Naive thymus-derived CD4-positive, alpha-beta T cell (primary cell): ENCODE measurements at regions of chr14 and their contacts with region 1.

Region 1: GRCh38 chr14:24710403-24711112 is 76.6 kb upstream of the GZMB start:
- DNase-seq: peak in 7 of 9 donors; percentile 16 to 48 (median 40)
- ATAC-seq: peak; percentile 80
- H3K4me3 ChIP-seq: no peak overlapping the region
- H3K4me3 Mint-ChIP-seq: no peak overlapping the region
- H3K27ac ChIP-seq: no peak overlapping the region
- H3K27ac Mint-ChIP-seq: no peak overlapping the region
- H3K4me1 ChIP-seq: no peaks in the 10 kb centered on the region
- H3K4me1 Mint-ChIP-seq: peaks cover 0 to 4% (median 0%) of the 10 kb centered on the region in 7 donors
- H3K27me3 ChIP-seq: no peaks in the 10 kb centered on the region
- H3K27me3 Mint-ChIP-seq: peaks cover 3 to 18% (median 9%) of the 10 kb centered on the region in 5 donors

Region 2: GRCh38 chr14:23910101-23910875 is 800.3 kb before region 1 on chr14:
- CTCF ChIA-PET with region 1: no interaction called
- POLR2A ChIA-PET with region 1: no interaction called
- intact Hi-C with region 1: no loop called
- DNase-seq: peak in 2 of 9 donors; percentile 2 to 4
- ATAC-seq: peak; percentile 45
- H3K4me3 ChIP-seq: no peak overlapping the region
- H3K4me3 Mint-ChIP-seq: no peak overlapping the region
- H3K27ac ChIP-seq: no peak overlapping the region
- H3K27ac Mint-ChIP-seq: no peak overlapping the region
- H3K4me1 ChIP-seq: no peaks in the 10 kb centered on the region
- H3K4me1 Mint-ChIP-seq: peaks cover 0 to 1% (median 0%) of the 10 kb centered on the region in 7 donors
- H3K27me3 ChIP-seq: no peaks in the 10 kb centered on the region
- H3K27me3 Mint-ChIP-seq: peaks cover 8 to 39% (median 20%) of the 10 kb centered on the region in 5 donors

Region 3: GRCh38 chr14:24398653-24399446 is 311.7 kb before region 1 on chr14 and contains the start of gene NYNRIN:
- CTCF ChIA-PET with region 1: no interaction called
- POLR2A ChIA-PET with region 1: no interaction called
- intact Hi-C with region 1: no loop called
- DNase-seq: peak in 7 of 9 donors; percentile 17 to 46 (median 35)
- ATAC-seq: peak; percentile 78
- H3K4me3 ChIP-seq: peak within 1 kb of the TSS; percentile 37
- H3K4me3 Mint-ChIP-seq: peak within 1 kb of the TSS; percentile 71 to 84 (median 76)
- H3K27ac ChIP-seq: peak within 1 kb of the TSS; percentile 43
- H3K27ac Mint-ChIP-seq: peak within 1 kb of the TSS in 1 of 9 donors; percentile 90
- H3K4me1 ChIP-seq: peaks cover 0 to 5% of the 10 kb centered on the region in 2 donors
- H3K4me1 Mint-ChIP-seq: peaks cover 0 to 18% (median 15%) of the 10 kb centered on the region in 7 donors
- H3K27me3 ChIP-seq: no peaks in the 10 kb centered on the region
- H3K27me3 Mint-ChIP-seq: peaks cover 0 to 61% (median 8%) of the 10 kb centered on the region in 5 donors
- total RNA-seq, gene NYNRIN: 0.08 to 1.3 (median 0.11) TPM

Region 4: GRCh38 chr14:24597403-24597802 is 113.2 kb before region 1 on chr14:
- CTCF ChIA-PET with region 1: no interaction called
- POLR2A ChIA-PET with region 1: no interaction called
- intact Hi-C with region 1: no loop called
- DNase-seq: no peak
- ATAC-seq: no peak
- H3K4me3 ChIP-seq: no peak overlapping the region
- H3K4me3 Mint-ChIP-seq: no peak overlapping the region
- H3K27ac ChIP-seq: no peak overlapping the region
- H3K27ac Mint-ChIP-seq: no peak overlapping the region
- H3K4me1 ChIP-seq: no peaks in the 10 kb centered on the region
- H3K4me1 Mint-ChIP-seq: peaks cover 0 to 12% (median 0%) of the 10 kb centered on the region in 7 donors
- H3K27me3 ChIP-seq: no peaks in the 10 kb centered on the region
- H3K27me3 Mint-ChIP-seq: peaks cover 12 to 28% (median 14%) of the 10 kb centered on the region in 5 donors

Region 5: GRCh38 chr14:24678801-24679247 is 31.7 kb before region 1 on chr14:
- CTCF ChIA-PET with region 1: interaction called, 3 read pairs
- POLR2A ChIA-PET with region 1: no interaction called
- intact Hi-C with region 1: loop called in 1 of 2 experiments (anchors 1 kb)
- DNase-seq: peak; percentile 45 to 85 (median 78)
- ATAC-seq: peak; percentile 96
- H3K4me3 ChIP-seq: peak overlapping the region; percentile 33
- H3K4me3 Mint-ChIP-seq: peak overlapping the region; percentile 71 to 93 (median 86)
- H3K27ac ChIP-seq: no peak overlapping the region
- H3K27ac Mint-ChIP-seq: peak overlapping the region; percentile 33 to 95 (median 70)
- H3K4me1 ChIP-seq: peaks cover 17 to 44% of the 10 kb centered on the region in 2 donors
- H3K4me1 Mint-ChIP-seq: peaks cover 35 to 65% (median 57%) of the 10 kb centered on the region in 7 donors
- H3K27me3 ChIP-seq: no peaks in the 10 kb centered on the region
- H3K27me3 Mint-ChIP-seq: peaks cover 0 to 4% (median 0%) of the 10 kb centered on the region in 5 donors

Region 6: GRCh38 chr14:25132732-25133422 is 422.3 kb after region 1 on chr14:
- CTCF ChIA-PET with region 1: interaction called, 4 read pairs
- POLR2A ChIA-PET with region 1: no interaction called
- intact Hi-C with region 1: loop called in 1 of 2 experiments (anchors 1 kb)
- DNase-seq: peak in 7 of 9 donors; percentile 2 to 30 (median 19)
- ATAC-seq: peak; percentile 90
- H3K4me3 ChIP-seq: no peak overlapping the region
- H3K4me3 Mint-ChIP-seq: peak overlapping the region in 1 of 10 donors; percentile 56
- H3K27ac ChIP-seq: no peak overlapping the region
- H3K27ac Mint-ChIP-seq: no peak overlapping the region
- H3K4me1 ChIP-seq: peaks cover 0 to 3% of the 10 kb centered on the region in 2 donors
- H3K4me1 Mint-ChIP-seq: peaks cover 0 to 8% (median 5%) of the 10 kb centered on the region in 7 donors
- H3K27me3 ChIP-seq: no peaks in the 10 kb centered on the region
- H3K27me3 Mint-ChIP-seq: peaks cover 17 to 57% (median 51%) of the 10 kb centered on the region in 5 donors

Region 7: GRCh38 chr14:25150934-25151790 is 440.6 kb after region 1 on chr14:
- CTCF ChIA-PET with region 1: no interaction called
- POLR2A ChIA-PET with region 1: no interaction called
- intact Hi-C with region 1: loop called (anchors 5 kb)
- DNase-seq: peak in 2 of 9 donors; percentile 6 to 10
- ATAC-seq: no peak
- H3K4me3 ChIP-seq: no peak overlapping the region
- H3K4me3 Mint-ChIP-seq: no peak overlapping the region
- H3K27ac ChIP-seq: no peak overlapping the region
- H3K27ac Mint-ChIP-seq: no peak overlapping the region
- H3K4me1 ChIP-seq: no peaks in the 10 kb centered on the region
- H3K4me1 Mint-ChIP-seq: no peaks in the 10 kb centered on the region
- H3K27me3 ChIP-seq: no peaks in the 10 kb centered on the region
- H3K27me3 Mint-ChIP-seq: peaks cover 8 to 30% (median 17%) of the 10 kb centered on the region in 5 donors

Region 8: GRCh38 chr14:25400607-25401206 is 690.1 kb after region 1 on chr14:
- CTCF ChIA-PET with region 1: no interaction called
- POLR2A ChIA-PET with region 1: no interaction called
- intact Hi-C with region 1: loop called in 1 of 2 experiments (anchors 10 kb)
- DNase-seq: no peak
- ATAC-seq: peak; percentile 63
- H3K4me3 ChIP-seq: no peak overlapping the region
- H3K4me3 Mint-ChIP-seq: no peak overlapping the region
- H3K27ac ChIP-seq: no peak overlapping the region
- H3K27ac Mint-ChIP-seq: no peak overlapping the region
- H3K4me1 ChIP-seq: no peaks in the 10 kb centered on the region
- H3K4me1 Mint-ChIP-seq: no peaks in the 10 kb centered on the region
- H3K27me3 ChIP-seq: no peaks in the 10 kb centered on the region
- H3K27me3 Mint-ChIP-seq: peaks cover 0 to 7% (median 4%) of the 10 kb centered on the region in 5 donors

Region 9: DNA sequence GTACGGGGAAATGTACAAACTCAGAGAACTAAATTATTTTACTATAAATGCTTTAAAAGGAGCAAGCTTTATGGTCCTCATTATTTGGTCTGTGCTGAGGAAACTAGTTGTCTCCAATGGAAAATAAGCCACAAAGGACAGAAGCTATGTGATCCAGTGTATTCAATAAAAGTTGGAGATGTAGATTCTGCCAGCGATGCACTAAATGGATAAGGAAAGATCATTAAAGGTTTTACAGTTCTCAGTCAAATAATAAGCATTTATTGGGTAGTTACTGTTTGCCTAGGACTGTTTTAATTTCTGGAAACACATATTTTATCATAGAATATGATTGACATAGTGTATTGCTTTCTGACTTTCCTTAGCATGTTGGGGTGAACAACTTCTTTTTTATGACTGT is 798.3 kb after region 1 on chr14:
- CTCF ChIA-PET with region 1: no interaction called
- POLR2A ChIA-PET with region 1: no interaction called
- intact Hi-C with region 1: no loop called
- DNase-seq: no peak
- ATAC-seq: no peak
- H3K4me3 ChIP-seq: no peak overlapping the region
- H3K4me3 Mint-ChIP-seq: no peak overlapping the region
- H3K27ac ChIP-seq: no peak overlapping the region
- H3K27ac Mint-ChIP-seq: no peak overlapping the region
- H3K4me1 ChIP-seq: no peaks in the 10 kb centered on the region
- H3K4me1 Mint-ChIP-seq: no peaks in the 10 kb centered on the region
- H3K27me3 ChIP-seq: no peaks in the 10 kb centered on the region
- H3K27me3 Mint-ChIP-seq: no peaks in the 10 kb centered on the region